ENCODE measurements at regions of chr17 and their contacts with region 1.

Region 1: DNA sequence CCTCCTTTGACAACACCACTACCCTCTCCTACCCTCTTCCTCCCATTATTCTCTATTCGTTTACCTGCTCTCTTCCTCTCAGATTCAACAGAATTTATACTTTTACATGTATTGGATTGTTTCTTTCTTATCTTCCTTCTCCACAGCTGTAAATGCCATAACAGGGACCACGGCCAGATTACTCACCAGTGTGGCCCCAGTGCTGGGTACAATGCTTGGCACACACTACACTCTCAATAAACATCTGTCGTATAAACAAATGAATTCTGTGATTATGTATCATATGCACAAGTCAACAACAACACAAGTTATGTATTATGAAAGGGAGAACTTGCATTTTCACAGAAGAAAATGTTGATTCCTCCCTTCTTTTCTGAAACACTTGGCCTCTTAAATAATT is 20.0 kb downstream of the AARSD1 start:
- DNase-seq: no peak
- ATAC-seq: no peak
- H3K4me3 ChIP-seq: no peak overlapping the region
- H3K27ac ChIP-seq: no peak overlapping the region
- H3K4me1 ChIP-seq: no peaks in the 10 kb centered on the region
- H3K27me3 ChIP-seq: no peaks in the 10 kb centered on the region
- CTCF ChIP-seq: no peak
- POLR2A ChIP-seq: no peak

Region 2: GRCh38 chr17:42698736-42699414 is 245.3 kb before region 1 on chr17:
- intact Hi-C with region 1: loop called (anchors 10 kb)
- DNase-seq: peak in 1 of 4 donors; percentile 26
- ATAC-seq: no peak
- H3K4me3 ChIP-seq: no peak overlapping the region
- H3K27ac ChIP-seq: no peak overlapping the region
- H3K4me1 ChIP-seq: no peaks in the 10 kb centered on the region
- H3K27me3 ChIP-seq: no peaks in the 10 kb centered on the region
- CTCF ChIP-seq: no peak
- POLR2A ChIP-seq: no peak

Region 3: DNA sequence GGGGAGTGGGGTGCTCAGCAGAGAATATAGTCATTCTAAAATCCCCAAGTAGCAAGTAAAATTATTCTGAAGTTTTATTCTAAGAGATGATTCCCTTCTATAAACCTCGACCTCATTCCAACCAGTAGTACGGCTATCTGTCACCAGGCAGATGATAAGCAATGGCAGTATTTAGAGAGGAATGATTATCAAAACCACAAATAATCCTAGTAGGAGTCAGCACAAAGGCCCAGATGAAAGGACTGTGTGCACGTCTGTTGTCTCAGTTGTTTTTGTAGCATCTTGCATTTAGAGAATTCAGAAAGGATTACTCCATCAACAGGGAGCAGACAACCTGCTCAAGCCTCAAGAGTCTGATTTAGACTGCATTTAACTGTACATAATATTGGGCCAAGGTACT is 220.6 kb before region 1 on chr17:
- intact Hi-C with region 1: no loop called
- DNase-seq: no peak
- ATAC-seq: no peak
- H3K4me3 ChIP-seq: no peak overlapping the region
- H3K27ac ChIP-seq: no peak overlapping the region
- H3K4me1 ChIP-seq: no peaks in the 10 kb centered on the region
- H3K27me3 ChIP-seq: no peaks in the 10 kb centered on the region
- CTCF ChIP-seq: no peak
- POLR2A ChIP-seq: no peak

Region 4: DNA sequence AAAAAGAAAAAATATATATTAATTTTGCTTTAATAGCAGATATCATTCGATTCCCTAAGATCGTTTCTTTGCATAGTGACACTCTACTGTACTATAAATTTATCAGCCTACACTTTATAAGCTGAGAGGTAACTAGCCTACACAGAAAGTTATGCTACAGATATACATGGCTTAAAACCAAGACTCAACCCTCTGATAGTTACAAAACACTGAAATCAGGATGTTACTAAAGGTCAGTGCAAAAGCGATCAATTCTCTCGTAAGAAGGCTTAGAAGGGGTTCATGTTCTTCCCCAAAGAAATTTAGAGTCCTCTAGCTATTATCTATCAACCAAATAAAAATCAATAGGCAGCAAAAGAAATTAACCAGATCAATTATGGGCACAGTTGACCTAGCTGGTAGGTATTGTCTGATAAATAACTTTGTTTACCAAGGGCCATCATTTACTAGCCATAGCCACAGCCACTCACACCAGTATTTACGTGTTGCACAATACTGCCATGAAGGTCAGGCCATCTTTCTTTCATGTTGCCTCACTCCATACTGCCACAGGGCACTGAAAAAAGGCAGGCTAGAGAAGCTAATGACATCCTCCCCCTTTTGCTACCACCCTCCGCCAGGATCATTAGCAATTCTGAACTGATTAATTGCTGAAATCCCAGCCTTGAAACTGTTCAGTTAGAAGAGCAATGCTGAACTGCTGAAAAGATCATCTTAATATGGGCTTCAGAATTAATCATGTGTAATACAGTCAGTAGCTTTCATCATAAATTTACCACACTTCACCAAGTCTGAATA is 124.6 kb after region 1 on chr17:
- intact Hi-C with region 1: no loop called
- DNase-seq: no peak
- ATAC-seq: no peak
- H3K4me3 ChIP-seq: no peak overlapping the region
- H3K27ac ChIP-seq: no peak overlapping the region
- H3K4me1 ChIP-seq: no peaks in the 10 kb centered on the region
- H3K27me3 ChIP-seq: no peaks in the 10 kb centered on the region
- CTCF ChIP-seq: no peak
- POLR2A ChIP-seq: no peak